RWPE1 (cell line): ENCODE measurements at regions of chr2 and their contacts with region 1.

Region 1: DNA sequence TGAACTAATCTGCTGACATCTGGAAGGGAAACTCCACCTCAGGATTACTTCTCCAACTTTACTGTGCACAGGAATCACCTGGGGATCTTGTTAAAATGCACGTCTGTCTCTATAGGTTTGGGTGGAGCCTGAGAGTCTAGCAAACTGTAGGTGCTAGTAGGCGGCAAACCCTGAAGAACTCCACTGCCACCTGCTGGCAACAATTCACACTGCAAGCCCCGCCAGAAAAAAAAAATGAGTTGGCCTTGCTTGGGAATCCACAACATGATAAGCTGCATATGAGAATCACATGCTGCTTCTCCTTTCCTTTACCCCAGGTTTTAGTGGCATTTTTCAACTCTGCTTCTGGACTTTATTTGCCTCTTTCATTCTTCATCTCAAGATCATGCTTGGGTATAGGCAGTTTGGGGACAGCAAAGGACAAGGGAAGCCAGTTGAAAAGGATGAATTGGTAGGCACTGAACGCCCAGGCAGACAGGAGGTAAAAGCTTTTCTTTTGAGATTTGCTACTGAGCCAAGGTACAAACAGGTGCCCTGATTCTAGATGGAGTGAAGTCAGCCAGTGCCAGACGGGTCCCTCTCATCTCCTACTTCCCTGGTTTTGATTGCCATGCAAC is 88.8 kb downstream of the VIT start:
- DNase-seq: peak; percentile 79
- H3K27ac ChIP-seq: no peak overlapping the region
- CTCF ChIP-seq: peak; percentile 96

Region 2: GRCh38 chr2:36708041-36708741 is 77.1 kb before region 1 on chr2:
- CTCF ChIA-PET with region 1: no interaction called
- POLR2A ChIA-PET with region 1: no interaction called
- DNase-seq: peak; percentile 14
- H3K27ac ChIP-seq: no peak overlapping the region
- CTCF ChIP-seq: no peak

Region 3: GRCh38 chr2:36773947-36774346 is 11.3 kb before region 1 on chr2:
- CTCF ChIA-PET with region 1: interaction called, 10 read pairs
- POLR2A ChIA-PET with region 1: no interaction called
- DNase-seq: no peak
- H3K27ac ChIP-seq: no peak overlapping the region
- CTCF ChIP-seq: no peak

Region 4: GRCh38 chr2:36800381-36800780 is 15.1 kb after region 1 on chr2:
- CTCF ChIA-PET with region 1: interaction called, 25 read pairs
- POLR2A ChIA-PET with region 1: no interaction called
- DNase-seq: no peak
- H3K27ac ChIP-seq: no peak overlapping the region
- CTCF ChIP-seq: no peak

Region 5: GRCh38 chr2:36820942-36821605 is 35.8 kb after region 1 on chr2:
- CTCF ChIA-PET with region 1: interaction called, 11 read pairs
- POLR2A ChIA-PET with region 1: no interaction called
- DNase-seq: no peak
- H3K27ac ChIP-seq: no peak overlapping the region
- CTCF ChIP-seq: no peak